Heart right ventricle (tissue), 16 donors: ENCODE measurements at regions of chr19 and their contacts with region 1.

Region 1: GRCh38 chr19:55516878-55517620 is 19.9 kb downstream of the SBK2 start:
- DNase-seq: peak; percentile 93 to 96
- ATAC-seq: peak; percentile 98 to 100 (median 99)
- H3K4me3 ChIP-seq: peak overlapping the region in 9 of 10 donors; percentile 29 to 61 (median 59)
- H3K27ac ChIP-seq: peak overlapping the region; percentile 86 to 99 (median 96)
- H3K4me1 ChIP-seq: peaks cover 3 to 22% (median 9%) of the 10 kb centered on the region in 9 donors
- H3K27me3 ChIP-seq: no peaks in the 10 kb centered on the region
- CTCF ChIP-seq: peak; percentile 73 to 92 (median 81)

Region 2: DNA sequence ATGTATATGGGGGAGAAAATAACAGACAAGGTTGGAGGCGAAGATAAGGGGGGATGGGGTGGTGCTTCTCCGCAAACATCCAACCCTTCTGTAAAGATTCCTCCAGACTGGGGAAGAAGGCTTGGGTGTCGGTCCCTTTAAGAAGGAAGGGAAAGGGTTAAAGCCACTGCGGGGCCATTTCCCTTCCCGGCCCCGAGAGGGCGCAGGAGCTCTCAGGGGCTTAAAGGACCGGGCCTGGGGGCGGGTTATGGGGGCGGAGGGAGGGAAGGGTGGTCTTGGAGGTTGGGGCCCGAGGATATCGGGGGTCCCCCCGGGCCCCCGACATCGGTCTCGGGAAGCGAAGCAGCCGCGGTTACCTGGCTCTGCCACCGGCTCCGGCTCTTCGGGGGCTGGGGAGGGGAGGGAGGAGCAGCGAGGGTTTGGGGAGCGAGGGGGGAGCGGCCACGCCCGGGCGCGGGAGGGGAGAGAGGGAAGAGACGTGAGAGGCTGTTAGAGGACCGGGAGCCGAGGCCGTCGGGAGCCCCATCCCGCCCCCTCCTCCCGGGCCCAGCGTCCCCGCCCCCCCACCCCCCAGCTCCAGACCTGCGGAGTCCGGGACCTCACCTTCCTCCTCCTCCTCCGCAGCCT is 370.9 kb before region 1 on chr19:
- intact Hi-C with region 1: loop called in 1 of 10 experiments (anchors 5 kb)
- DNase-seq: no peak
- ATAC-seq: peak in 3 of 8 donors; percentile 2 to 7 (median 2)
- H3K4me3 ChIP-seq: peak overlapping the region in 1 of 10 donors; percentile 26
- H3K27ac ChIP-seq: peak overlapping the region in 2 of 10 donors; percentile 28 to 31
- H3K4me1 ChIP-seq: peaks cover 0 to 41% (median 8%) of the 10 kb centered on the region in 9 donors
- H3K27me3 ChIP-seq: peaks cover 0 to 81% (median 72%) of the 10 kb centered on the region in 7 donors
- CTCF ChIP-seq: peak in 7 of 9 donors; percentile 26 to 51 (median 41)

Region 3: GRCh38 chr19:55258828-55259539 is 258.1 kb before region 1 on chr19 and contains the start of gene PPP6R1:
- intact Hi-C with region 1: no loop called
- DNase-seq: peak; percentile 98
- ATAC-seq: peak; percentile 94 to 98 (median 96)
- H3K4me3 ChIP-seq: peak within 1 kb of the TSS; percentile 68 to 99 (median 94)
- H3K27ac ChIP-seq: peak within 1 kb of the TSS; percentile 78 to 98 (median 92)
- H3K4me1 ChIP-seq: peaks cover 11 to 51% (median 48%) of the 10 kb centered on the region in 9 donors
- H3K27me3 ChIP-seq: no peaks in the 10 kb centered on the region
- CTCF ChIP-seq: no peak
- total RNA-seq, gene PPP6R1: 31.1 to 51.3 (median 39.0) TPM

Region 4: DNA sequence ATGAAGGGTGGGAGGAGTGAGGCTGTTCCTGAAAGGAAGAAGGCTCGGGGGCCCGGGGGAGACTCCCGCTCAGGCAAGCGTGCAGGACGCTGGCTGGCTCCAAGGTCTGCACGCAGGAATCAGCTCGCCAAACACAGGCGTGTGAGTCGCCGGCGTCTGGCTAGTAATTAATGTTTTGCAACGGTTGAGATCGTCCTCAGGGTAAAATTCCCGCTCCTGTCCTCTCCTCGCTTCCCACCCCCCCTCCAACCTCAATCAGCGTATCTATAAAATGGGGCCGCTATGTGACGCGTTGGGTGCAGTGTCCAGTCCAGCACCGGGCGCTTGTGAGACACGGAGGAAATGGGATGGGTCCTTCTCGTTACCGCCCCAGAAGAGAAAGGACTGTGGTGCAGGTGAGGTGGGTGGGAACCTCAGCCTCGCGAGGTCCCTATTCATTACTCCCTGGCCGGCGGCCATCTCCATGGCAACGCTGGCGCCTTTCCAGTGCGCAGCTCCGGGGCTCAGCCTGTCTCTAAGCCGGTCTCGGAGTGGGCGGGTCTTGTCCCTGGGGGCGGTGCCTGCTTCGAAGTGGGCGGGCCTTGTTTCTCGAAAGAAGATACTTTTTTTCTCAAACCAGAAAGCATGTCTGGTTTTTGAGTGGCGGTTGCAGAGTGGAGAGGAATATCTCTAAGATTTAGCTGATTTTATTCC is 70.1 kb after region 1 on chr19:
- intact Hi-C with region 1: loop called in 2 of 10 experiments (anchors 5 kb)
- DNase-seq: peak; percentile 96 to 97
- ATAC-seq: peak; percentile 86 to 95 (median 92)
- H3K4me3 ChIP-seq: peak overlapping the region in 9 of 10 donors; percentile 21 to 45 (median 42)
- H3K27ac ChIP-seq: peak overlapping the region in 1 of 10 donors; percentile 48
- H3K4me1 ChIP-seq: peaks cover 10 to 30% (median 25%) of the 10 kb centered on the region in 9 donors
- H3K27me3 ChIP-seq: peaks cover 0 to 24% (median 0%) of the 10 kb centered on the region in 7 donors
- CTCF ChIP-seq: no peak

Region 5: DNA sequence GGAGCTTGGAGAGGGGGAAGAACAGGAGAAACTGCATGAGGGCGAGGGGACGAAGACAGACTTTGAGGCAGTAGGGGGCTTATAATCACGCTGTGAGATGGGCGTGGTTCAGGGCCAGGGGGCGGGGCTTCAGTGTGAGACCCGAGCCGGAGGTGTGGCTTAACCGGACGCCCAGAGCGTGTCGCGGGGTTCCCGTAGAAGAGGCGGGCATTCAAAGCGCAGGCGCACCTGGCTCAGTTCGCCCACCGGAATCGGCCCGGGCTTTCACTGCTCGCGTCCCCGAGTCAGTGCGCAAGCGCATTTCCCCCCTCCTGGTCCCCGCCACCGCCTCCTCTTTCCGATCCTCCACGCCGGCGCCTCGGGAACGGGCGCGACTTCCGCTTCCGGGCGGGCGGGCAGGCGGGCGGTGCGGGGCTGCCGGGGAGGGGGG is 88.2 kb after region 1 on chr19:
- intact Hi-C with region 1: loop called in 7 of 10 experiments (anchors 1 to 10 kb)
- DNase-seq: peak; percentile 98
- ATAC-seq: peak; percentile 86 to 93 (median 89)
- H3K4me3 ChIP-seq: peak overlapping the region; percentile 51 to 85 (median 77)
- H3K27ac ChIP-seq: peak overlapping the region; percentile 84 to 98 (median 96)
- H3K4me1 ChIP-seq: peaks cover 4 to 49% (median 30%) of the 10 kb centered on the region in 9 donors
- H3K27me3 ChIP-seq: no peaks in the 10 kb centered on the region
- CTCF ChIP-seq: no peak

Region 6: DNA sequence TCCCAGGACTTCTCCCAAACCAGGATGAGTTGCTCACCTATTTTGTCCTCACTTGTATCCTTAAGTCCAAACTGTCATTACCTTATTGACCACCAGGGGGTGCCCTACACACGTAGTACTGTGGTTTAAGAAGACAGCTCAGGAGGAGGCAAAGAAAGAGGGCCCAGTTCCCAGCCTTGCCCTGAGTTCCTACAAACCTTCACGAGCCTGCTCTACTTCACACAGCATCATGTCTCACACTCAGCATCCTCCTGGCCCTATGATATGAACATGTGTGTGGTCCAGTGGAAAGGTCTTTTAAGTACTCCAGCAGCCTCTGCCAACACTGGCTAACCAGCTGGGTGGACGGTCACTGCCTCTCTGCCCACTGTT is 115.4 kb after region 1 on chr19:
- intact Hi-C with region 1: loop called in 9 of 10 experiments (anchors 1 to 10 kb)
- DNase-seq: peak in 1 of 2 donors; percentile 92
- ATAC-seq: peak; percentile 27 to 73 (median 49)
- H3K4me3 ChIP-seq: no peak overlapping the region
- H3K27ac ChIP-seq: peak overlapping the region in 1 of 10 donors; percentile 31
- H3K4me1 ChIP-seq: peaks cover 7 to 37% (median 26%) of the 10 kb centered on the region in 9 donors
- H3K27me3 ChIP-seq: no peaks in the 10 kb centered on the region
- CTCF ChIP-seq: peak; percentile 82 to 94 (median 86)

Region 7: DNA sequence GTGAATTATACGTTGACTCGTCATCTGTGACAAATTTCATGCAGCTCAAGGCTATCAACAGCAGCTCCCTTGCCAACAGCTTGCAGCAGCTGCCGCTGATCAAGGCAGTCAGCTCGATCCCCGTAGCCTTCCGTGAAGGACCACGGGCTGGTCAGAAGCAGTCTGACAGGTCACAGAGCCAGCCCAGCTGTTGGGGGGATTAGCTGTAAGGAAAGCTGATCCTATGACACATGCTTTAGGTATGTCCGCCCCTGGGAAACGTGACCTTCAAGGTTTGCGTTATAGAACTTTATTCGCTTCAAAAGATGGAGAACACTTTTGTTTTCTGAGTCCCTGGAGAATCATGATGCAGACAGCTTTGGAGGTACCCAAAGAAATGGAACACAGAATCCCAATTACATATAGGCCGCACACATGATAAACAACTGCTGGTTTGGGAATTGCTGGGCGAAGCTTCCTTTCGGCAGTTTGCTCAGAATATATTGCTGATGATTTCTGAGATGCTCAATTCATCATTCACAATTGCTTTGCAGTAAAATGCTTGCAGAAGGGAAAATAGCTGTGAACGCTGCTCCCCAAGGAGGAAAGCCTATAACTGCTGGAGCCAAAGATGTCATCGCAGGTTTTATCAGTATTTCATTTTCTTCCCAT is 1540.1 kb after region 1 on chr19:
- intact Hi-C with region 1: no loop called
- DNase-seq: peak in 1 of 2 donors; percentile 27
- ATAC-seq: peak in 4 of 8 donors; percentile 51 to 79 (median 62)
- H3K4me3 ChIP-seq: no peak overlapping the region
- H3K27ac ChIP-seq: no peak overlapping the region
- H3K4me1 ChIP-seq: no peaks in the 10 kb centered on the region
- H3K27me3 ChIP-seq: peaks cover 0 to 23% (median 15%) of the 10 kb centered on the region in 7 donors
- CTCF ChIP-seq: no peak